Right cardiac atrium (tissue), 5 donors: ENCODE measurements at regions of chrX and their contacts with region 1.

Region 1: GRCh38 chrX:120365320-120365719 is 3.4 kb downstream of the ATP1B4 start:
- DNase-seq: peak; percentile 39 to 84 (median 76)
- ATAC-seq: peak; percentile 49 to 59
- H3K4me3 ChIP-seq: no peak overlapping the region
- H3K27ac ChIP-seq: no peak overlapping the region
- H3K4me1 ChIP-seq: peaks cover 5% of the 10 kb centered on the region
- H3K27me3 ChIP-seq: no peaks in the 10 kb centered on the region

Region 2: DNA sequence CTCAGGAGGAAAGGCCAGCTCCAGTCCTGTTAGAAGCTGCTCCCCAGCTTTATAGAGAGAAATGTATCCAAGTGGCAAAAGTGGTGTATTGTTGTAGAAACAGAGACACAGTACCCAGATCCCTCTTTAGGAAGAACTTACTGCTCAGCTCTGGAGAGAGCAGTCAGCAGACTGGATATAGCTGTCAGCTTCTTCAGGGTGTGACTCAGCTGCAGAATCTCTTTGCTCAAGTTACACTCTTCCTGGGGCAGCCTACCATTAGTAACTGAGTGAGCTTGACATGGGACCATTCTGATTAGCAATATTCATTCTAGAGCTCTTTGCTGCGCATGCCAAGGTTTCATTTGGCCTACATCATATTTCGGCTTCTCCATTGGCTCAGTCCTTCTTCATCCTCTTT is 37.0 kb after region 1 on chrX:
- intact Hi-C with region 1: no loop called
- DNase-seq: no peak
- ATAC-seq: no peak
- H3K4me3 ChIP-seq: no peak overlapping the region
- H3K27ac ChIP-seq: no peak overlapping the region
- H3K4me1 ChIP-seq: no peaks in the 10 kb centered on the region
- H3K27me3 ChIP-seq: no peaks in the 10 kb centered on the region

Region 3: GRCh38 chrX:120446498-120446897 is 81.2 kb after region 1 on chrX:
- intact Hi-C with region 1: loop called in 1 of 4 experiments (anchors 10 kb)
- DNase-seq: no peak
- ATAC-seq: no peak
- H3K4me3 ChIP-seq: no peak overlapping the region
- H3K27ac ChIP-seq: no peak overlapping the region
- H3K4me1 ChIP-seq: no peaks in the 10 kb centered on the region
- H3K27me3 ChIP-seq: no peaks in the 10 kb centered on the region